ENCODE measurements at regions of chr2 and their contacts with region 1.

Region 1: GRCh38 chr2:58039170-58039611 is 7.4 kb upstream of the VRK2 start:
- DNase-seq: no peak
- CTCF ChIP-seq: no peak

Region 2: DNA sequence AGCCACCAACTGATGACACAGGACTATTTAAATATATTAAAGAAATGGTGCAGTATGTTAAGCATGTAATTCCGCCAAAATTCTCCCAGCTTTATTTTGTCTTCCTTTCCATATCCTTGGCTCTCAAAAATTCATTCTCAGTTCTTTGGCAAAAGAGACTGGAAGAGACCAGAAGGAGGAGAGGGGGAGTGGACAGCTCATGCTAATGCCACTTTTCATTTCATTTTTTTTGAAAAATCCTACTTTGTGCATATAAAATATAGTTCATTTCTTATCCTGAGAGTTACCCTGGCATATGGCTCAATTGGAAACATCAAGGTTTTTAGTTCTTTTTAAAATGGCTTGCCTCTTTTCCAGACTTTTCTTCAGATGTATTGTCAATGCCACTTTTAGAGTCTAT is 121.1 kb before region 1 on chr2:
- in situ Hi-C with region 1: loop called (anchors 10 kb)
- DNase-seq: no peak
- CTCF ChIP-seq: no peak

Region 3: DNA sequence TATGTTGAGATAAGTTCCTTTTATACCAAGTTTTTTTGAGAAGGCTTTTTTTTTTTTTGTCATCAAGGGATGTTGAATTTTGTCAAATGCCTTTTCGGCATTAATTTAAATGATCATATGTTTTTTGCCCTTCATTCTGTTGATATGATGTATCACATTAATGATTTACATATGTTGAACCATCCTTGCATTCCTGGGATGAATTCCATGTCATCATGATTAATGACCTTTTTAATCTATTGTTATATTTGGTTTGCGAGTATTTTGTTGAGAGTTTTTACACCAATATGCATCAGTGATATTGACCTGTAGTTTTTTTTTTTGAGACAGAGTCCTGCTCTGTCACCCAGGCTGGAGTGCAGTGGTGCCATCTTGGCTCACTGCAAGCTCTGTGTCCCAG is 787.6 kb after region 1 on chr2:
- in situ Hi-C with region 1: no loop called
- DNase-seq: no peak
- CTCF ChIP-seq: no peak

Measured in GM13976 (cell line).